GM10248 (cell line): ENCODE measurements at regions of chr12 and their contacts with region 1.

Region 1: DNA sequence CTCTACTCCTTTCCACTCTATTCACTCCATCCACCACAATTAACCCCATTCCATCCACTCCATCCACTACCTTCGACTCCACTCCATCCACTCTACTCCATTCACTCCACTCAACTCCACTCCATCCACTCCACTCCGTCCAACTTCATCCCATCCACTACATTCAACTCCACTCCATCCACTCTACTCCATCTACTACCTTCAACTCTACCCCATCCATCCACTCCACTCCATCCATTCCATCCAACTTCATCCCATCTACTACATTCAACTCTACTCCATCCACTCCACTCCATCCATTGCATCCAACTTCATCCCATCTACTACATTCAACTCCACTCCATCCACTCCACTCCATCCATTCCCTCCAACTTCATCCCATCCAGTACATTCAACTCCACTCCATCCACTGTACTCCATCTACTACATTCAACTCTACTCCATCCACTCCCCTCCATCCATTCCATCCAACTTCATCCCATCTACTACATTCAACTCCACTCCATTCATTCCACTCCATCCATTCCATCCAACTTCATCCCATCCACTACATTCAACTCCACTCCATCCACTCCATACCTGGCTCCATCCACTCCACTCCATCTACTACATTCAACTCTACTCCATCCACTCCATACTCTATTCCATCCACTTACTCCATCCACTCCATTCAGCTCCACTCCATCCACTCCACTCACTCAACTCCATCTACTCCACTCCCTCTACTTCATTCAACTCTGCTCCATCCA is 16.4 kb downstream of the HNF1A start:
- DNase-seq: no peak
- CTCF ChIP-seq: no peak

Region 2: DNA sequence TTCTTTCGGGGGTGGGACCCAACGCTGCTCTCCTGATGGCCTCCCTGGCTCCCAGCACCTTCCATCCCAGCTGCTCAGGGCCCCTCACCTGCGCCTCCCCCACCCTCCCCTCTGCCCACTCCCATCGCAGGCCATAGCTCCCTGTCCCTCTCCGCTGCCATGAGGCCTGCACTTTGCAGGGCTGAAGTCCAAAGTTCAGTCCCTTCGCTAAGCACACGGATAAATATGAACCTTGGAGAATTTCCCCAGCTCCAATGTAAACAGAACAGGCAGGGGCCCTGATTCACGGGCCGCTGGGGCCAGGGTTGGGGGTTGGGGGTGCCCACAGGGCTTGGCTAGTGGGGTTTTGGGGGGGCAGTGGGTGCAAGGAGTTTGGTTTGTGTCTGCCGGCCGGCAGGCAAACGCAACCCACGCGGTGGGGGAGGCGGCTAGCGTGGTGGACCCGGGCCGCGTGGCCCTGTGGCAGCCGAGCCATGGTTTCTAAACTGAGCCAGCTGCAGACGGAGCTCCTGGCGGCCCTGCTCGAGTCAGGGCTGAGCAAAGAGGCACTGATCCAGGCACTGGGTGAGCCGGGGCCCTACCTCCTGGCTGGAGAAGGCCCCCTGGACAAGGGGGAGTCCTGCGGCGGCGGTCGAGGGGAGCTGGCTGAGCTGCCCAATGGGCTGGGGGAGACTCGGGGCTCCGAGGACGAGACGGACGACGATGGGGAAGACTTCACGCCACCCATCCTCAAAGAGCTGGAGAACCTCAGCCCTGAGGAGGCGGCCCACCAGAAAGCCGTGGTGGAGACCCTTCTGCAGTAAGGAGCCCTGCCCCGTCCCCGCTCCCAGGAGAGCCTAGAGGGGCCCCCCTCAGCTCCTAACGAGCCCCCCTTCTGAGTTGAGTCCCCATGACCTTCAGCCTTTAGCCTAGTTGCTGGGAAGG is 16.2 kb before region 1 on chr12 and contains the start of gene HNF1A:
- CTCF ChIA-PET with region 1: interaction called, 12 read pairs
- POLR2A ChIA-PET with region 1: no interaction called
- DNase-seq: no peak
- CTCF ChIP-seq: no peak

Region 3: GRCh38 chr12:121015825-121016766 is 21.3 kb after region 1 on chr12 and contains the start of gene C12orf43:
- CTCF ChIA-PET with region 1: no interaction called
- POLR2A ChIA-PET with region 1: no interaction called
- DNase-seq: peak; percentile 97
- CTCF ChIP-seq: no peak